Panc1 (cell line): ENCODE measurements at regions of chr11 and their contacts with region 1.

Region 1: DNA sequence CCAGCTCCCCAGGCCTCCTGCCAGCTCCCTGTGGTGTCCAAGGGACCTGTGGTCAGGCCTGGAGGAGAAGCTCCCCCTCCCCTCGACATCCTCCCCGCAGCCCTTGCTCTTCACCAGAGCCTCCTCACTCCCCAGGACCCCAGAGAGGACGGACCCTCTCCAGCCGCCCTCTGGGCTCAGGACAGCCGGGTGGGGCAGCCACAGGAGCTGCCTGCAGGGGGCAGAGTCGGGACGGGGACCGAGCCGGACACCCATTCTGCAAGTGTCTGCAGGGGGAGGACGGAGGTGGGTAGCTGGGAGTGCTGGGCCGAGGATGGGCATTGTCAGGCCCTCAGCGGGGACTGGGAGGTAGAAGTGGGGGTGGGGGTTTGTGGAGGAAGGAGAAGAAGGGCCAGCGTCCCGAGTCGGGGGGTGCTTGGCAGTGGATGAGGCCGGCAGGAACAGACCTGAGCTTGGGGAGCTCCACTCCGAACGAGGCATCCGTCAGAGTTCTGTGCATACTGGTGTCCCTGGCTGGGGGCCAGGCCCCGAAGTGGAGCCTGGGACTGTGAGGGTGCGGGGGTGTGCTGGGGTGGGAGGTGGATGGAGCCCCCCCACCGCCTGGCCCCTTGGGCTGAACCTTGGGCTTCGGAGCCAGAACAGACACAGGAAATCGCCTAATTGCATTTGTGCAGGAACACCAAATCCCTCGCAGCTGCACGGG is 15.2 kb downstream of the PRR33 start:
- DNase-seq: no peak
- ATAC-seq: no peak
- H3K4me3 ChIP-seq: no peak overlapping the region
- H3K27ac ChIP-seq: peak overlapping the region; percentile 44; the same call in 1 of the 2 replicates
- H3K4me1 ChIP-seq: peaks cover 34% of the 10 kb centered on the region
- H3K27me3 ChIP-seq: no peaks in the 10 kb centered on the region
- CTCF ChIP-seq: peak; percentile 93

Region 2: DNA sequence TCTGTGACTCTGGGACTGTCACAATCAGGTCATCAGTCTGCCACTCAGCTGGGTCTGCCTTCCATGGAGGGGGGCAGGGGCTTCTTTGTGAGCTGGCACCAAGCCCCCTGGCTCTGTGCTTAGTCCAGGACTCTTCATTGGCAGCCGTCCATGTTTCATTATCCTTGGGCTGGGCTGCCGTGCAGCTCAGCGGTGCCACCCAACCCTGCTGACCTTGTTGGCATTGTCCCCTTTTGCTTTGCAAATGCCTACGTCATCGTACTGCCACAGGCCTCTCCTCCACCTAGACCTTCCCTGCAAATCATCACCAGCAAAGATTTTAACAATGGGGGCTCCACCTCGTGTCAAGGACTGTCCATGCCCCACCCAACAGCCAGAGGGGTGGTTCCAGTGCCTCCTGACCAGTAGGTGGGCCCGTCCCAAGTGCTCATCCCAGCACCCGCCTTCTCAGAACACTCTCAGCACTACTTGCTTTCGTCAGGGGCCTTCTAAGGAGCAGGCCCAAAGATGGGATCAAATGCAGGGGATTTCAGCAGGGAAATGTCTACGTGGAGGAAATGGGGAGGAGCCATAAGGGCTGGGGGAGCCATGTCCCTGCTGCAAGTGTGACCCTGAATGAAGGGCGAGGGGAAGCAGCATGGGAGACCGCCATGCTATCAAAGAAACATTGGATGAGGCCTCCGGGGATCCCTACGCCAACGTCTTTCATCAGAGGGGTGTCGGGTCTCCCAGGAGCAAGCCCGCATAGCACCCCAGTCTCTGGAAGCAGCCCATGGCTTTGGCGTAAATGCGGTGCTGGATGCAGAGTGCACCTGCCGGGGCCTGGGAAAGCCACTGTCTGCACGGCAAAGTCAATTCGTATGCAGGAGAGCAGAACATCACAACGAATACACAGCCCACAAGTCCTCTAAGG is 161.3 kb before region 1 on chr11:
- CTCF ChIA-PET with region 1: interaction called, 10 read pairs
- POLR2A ChIA-PET with region 1: no interaction called
- in situ Hi-C with region 1: no loop called
- intact Hi-C with region 1: no loop called
- DNase-seq: no peak
- ATAC-seq: 0 out of 2 replicates have a peak, but pooled peaks have one; percentile 34
- H3K4me3 ChIP-seq: no peak overlapping the region
- H3K27ac ChIP-seq: no peak overlapping the region
- H3K4me1 ChIP-seq: no peaks in the 10 kb centered on the region
- H3K27me3 ChIP-seq: no peaks in the 10 kb centered on the region; the same call in 1 of the 2 replicates
- CTCF ChIP-seq: no peak

Region 3: GRCh38 chr11:1891261-1891945 is 14.9 kb after region 1 on chr11 and contains the start of gene PRR33:
- CTCF ChIA-PET with region 1: interaction called, 12 read pairs
- POLR2A ChIA-PET with region 1: no interaction called
- in situ Hi-C with region 1: no loop called
- intact Hi-C with region 1: no loop called
- DNase-seq: no peak
- ATAC-seq: peak; percentile 32; the same call in 1 of the 2 replicates
- H3K4me3 ChIP-seq: no peak within 1 kb of the TSS
- H3K27ac ChIP-seq: no peak within 1 kb of the TSS
- H3K4me1 ChIP-seq: no peaks in the 10 kb centered on the region
- H3K27me3 ChIP-seq: peaks cover 4% of the 10 kb centered on the region; the same call in 1 of the 2 replicates
- CTCF ChIP-seq: no peak
- total RNA-seq, gene PRR33: not detected

Region 4: GRCh38 chr11:1917671-1918516 is 41.4 kb after region 1 on chr11:
- CTCF ChIA-PET with region 1: interaction called, 15 read pairs
- POLR2A ChIA-PET with region 1: no interaction called
- in situ Hi-C with region 1: no loop called
- intact Hi-C with region 1: loop called (anchors 1 kb)
- DNase-seq: no peak
- ATAC-seq: peak; percentile 43
- H3K4me3 ChIP-seq: no peak overlapping the region
- H3K27ac ChIP-seq: no peak overlapping the region
- H3K4me1 ChIP-seq: peaks cover 9% of the 10 kb centered on the region
- H3K27me3 ChIP-seq: no peaks in the 10 kb centered on the region
- CTCF ChIP-seq: peak; percentile 86; the same call in 1 of the 2 replicates

Region 5: DNA sequence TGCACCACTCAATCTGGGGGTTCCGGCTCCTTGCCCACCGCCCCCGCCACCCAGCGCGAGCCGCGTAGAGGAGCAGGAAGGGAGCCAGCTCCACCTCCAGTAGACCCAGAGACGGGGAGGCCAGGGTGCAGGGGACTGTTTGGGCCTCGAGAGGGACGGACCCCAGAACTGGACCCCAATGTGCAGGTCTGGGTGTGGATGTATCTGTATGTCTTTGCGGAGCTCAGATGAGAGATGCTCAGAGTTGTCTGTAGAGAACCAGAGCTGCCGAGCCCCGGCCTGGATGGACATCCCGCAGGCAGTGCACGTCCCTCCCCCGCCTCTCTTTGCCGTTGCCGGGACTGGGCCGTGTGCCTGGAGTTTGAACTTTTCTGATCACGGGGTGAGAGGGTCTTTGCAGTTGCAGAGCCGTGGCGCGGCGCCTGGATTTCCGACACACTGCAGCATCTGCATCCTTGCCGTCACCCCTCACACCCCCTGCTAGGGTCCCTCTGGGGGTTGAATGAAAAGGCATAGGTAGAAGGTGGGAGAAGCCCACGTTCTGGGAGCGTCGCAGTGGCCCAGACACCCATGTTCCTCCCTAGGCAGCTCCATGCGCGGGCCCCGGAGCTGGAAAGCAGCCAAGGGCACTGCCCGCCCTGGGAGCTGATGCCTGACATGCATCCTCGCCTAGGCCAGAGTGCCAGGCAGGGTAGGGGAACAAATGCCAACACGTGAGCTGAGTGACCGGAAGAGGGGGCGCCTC is 673.5 kb after region 1 on chr11:
- CTCF ChIA-PET with region 1: no interaction called
- POLR2A ChIA-PET with region 1: no interaction called
- in situ Hi-C with region 1: no loop called
- intact Hi-C with region 1: no loop called
- DNase-seq: no peak
- ATAC-seq: no peak
- H3K4me3 ChIP-seq: no peak overlapping the region
- H3K27ac ChIP-seq: no peak overlapping the region
- H3K4me1 ChIP-seq: no peaks in the 10 kb centered on the region
- H3K27me3 ChIP-seq: peaks cover 1% of the 10 kb centered on the region
- CTCF ChIP-seq: no peak